GM12878 (cell line): ENCODE measurements at regions of chr16 and their contacts with region 1.

Region 1: GRCh38 chr16:9913604-9914326 is 268.5 kb downstream of the GRIN2A start:
- DNase-seq: no peak
- ATAC-seq: no peak; the same call in 2 of the 3 replicates
- H3K4me3 ChIP-seq: no peak overlapping the region
- H3K27ac ChIP-seq: peak overlapping the region; percentile 63
- H3K4me1 ChIP-seq: peaks cover 17% of the 10 kb centered on the region
- H3K27me3 ChIP-seq: no peaks in the 10 kb centered on the region
- CTCF ChIP-seq: no peak
- EP300 ChIP-seq: no peak
- POLR2A ChIP-seq: no peak
- RAD21 ChIP-seq: no peak

Region 2: GRCh38 chr16:9800186-9800738 is 113.5 kb before region 1 on chr16:
- CTCF ChIA-PET with region 1: no interaction called
- POLR2A ChIA-PET with region 1: no interaction called
- RAD21 ChIA-PET with region 1: no interaction called
- SMC1A ChIA-PET with region 1: no interaction called
- in situ Hi-C with region 1: no loop called
- intact Hi-C with region 1: no loop called
- DNase-seq: no peak
- ATAC-seq: no peak
- H3K4me3 ChIP-seq: no peak overlapping the region
- H3K27ac ChIP-seq: no peak overlapping the region
- H3K4me1 ChIP-seq: peaks cover 2% of the 10 kb centered on the region; the same call in 1 of the 2 replicates
- H3K27me3 ChIP-seq: no peaks in the 10 kb centered on the region
- CTCF ChIP-seq: no peak
- EP300 ChIP-seq: no peak
- POLR2A ChIP-seq: no peak
- RAD21 ChIP-seq: no peak

Region 3: DNA sequence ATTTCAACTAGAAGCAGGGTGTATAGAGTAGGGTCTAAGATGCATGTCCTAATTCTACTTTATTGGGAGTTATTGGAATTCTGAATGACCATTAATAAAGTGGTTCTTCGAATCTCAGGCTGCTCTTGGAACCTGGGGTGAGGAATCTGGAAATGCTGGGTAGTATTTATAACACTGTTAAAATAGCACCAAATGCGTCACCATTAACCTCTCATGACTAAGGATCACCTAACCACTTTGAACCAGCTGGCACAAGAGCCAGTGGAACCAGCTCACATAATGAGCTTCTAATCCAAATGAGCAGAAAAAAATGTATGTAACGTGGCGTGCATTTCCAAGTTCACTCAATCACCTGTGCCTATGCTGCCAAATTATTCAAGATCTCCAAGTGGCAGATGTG is 13.2 kb before region 1 on chr16:
- CTCF ChIA-PET with region 1: interaction called, 8 read pairs
- POLR2A ChIA-PET with region 1: interaction called, 5 read pairs
- RAD21 ChIA-PET with region 1: interaction called, 7 read pairs
- SMC1A ChIA-PET with region 1: interaction called, 28 read pairs
- in situ Hi-C with region 1: no loop called
- intact Hi-C with region 1: no loop called
- DNase-seq: no peak
- ATAC-seq: no peak
- H3K4me3 ChIP-seq: no peak overlapping the region
- H3K27ac ChIP-seq: no peak overlapping the region
- H3K4me1 ChIP-seq: peaks cover 13% of the 10 kb centered on the region
- H3K27me3 ChIP-seq: no peaks in the 10 kb centered on the region
- CTCF ChIP-seq: no peak
- EP300 ChIP-seq: no peak
- POLR2A ChIP-seq: no peak
- RAD21 ChIP-seq: no peak

Region 4: GRCh38 chr16:10541366-10541765 is 627.6 kb after region 1 on chr16:
- CTCF ChIA-PET with region 1: no interaction called
- POLR2A ChIA-PET with region 1: no interaction called
- RAD21 ChIA-PET with region 1: no interaction called
- SMC1A ChIA-PET with region 1: no interaction called
- in situ Hi-C with region 1: no loop called
- intact Hi-C with region 1: no loop called
- DNase-seq: no peak
- ATAC-seq: no peak
- H3K4me3 ChIP-seq: no peak overlapping the region
- H3K27ac ChIP-seq: no peak overlapping the region
- H3K4me1 ChIP-seq: no peaks in the 10 kb centered on the region
- H3K27me3 ChIP-seq: no peaks in the 10 kb centered on the region
- CTCF ChIP-seq: no peak
- EP300 ChIP-seq: no peak
- POLR2A ChIP-seq: no peak
- RAD21 ChIP-seq: no peak